Motor neuron (in vitro differentiated cells): ENCODE measurements at regions of chr6 and their contacts with region 1.

Region 1: GRCh38 chr6:35139908-35140655 is 1.1 kb downstream of the TCP11 start:
- ATAC-seq: peak in 2 of 8 experiments; percentile 16 to 50
- H3K4me3 ChIP-seq: no peak overlapping the region
- H3K27ac ChIP-seq: no peak overlapping the region
- H3K4me1 ChIP-seq: peaks cover 2 to 3% of the 10 kb centered on the region in 2 donors

Region 2: GRCh38 chr6:34887753-34888513 is 252.1 kb before region 1 on chr6 and contains the start of gene TAF11:
- in situ Hi-C with region 1: loop called in 1 of 9 experiments (anchors 25 kb)
- ATAC-seq: peak; percentile 85 to 90 (median 87)
- H3K4me3 ChIP-seq: peak within 1 kb of the TSS; percentile 92 to 99 (median 97)
- H3K27ac ChIP-seq: peak within 1 kb of the TSS; percentile 87 to 89
- H3K4me1 ChIP-seq: peaks cover 6 to 15% of the 10 kb centered on the region in 2 donors
- total RNA-seq, gene TAF11: 29.7 to 59.5 (median 39.1) TPM

Region 3: GRCh38 chr6:35202066-35202546 is 62.0 kb after region 1 on chr6:
- in situ Hi-C with region 1: loop called in 1 of 9 experiments (anchors 10 kb)
- ATAC-seq: no peak
- H3K4me3 ChIP-seq: no peak overlapping the region
- H3K27ac ChIP-seq: no peak overlapping the region
- H3K4me1 ChIP-seq: no peaks in the 10 kb centered on the region

Region 4: DNA sequence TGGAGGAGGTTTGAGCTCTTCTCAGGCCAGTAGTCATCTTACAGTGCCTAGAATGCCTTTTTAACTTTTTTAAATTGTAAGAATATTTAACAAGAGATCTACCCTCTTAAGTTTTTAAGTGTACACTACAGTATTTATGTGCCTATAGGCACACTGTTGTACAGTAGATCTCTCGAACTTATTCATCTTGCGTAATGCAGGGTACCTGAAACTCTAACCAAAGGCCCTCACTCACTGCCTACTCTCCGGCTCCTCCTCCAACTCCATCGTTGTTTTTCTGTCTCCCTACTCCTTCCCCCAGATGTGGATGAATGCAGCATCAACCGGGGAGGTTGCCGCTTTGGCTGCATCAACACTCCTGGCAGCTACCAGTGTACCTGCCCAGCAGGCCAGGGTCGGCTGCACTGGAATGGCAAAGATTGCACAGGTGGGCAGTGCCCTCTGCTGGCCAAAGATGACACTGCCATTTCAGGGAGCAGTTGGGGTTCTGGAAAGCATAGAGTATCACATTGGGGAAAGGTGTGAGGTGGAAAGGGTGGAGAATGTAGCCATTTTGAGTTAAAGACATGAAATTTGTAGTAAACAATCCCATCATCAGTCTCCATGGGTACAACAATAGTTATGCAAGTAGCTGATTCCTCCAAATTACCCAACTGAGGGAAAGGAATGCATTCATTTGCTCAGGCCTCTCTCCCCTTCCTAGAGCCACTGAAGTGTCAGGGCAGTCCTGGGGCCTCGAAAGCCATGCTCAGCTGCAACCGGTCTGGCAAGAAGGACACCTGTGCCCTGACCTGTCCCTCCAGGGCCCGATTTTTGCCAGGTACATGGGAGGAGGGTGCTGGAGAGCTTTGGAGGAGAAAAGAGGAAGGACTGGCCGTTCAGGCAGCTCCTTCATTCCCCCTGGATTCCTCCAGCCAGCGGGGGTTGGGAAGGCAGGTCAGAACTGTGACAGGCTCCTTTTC is 101.0 kb after region 1 on chr6:
- in situ Hi-C with region 1: loop called in 1 of 9 experiments (anchors 25 kb)
- ATAC-seq: peak; percentile 81 to 98 (median 90)
- H3K4me3 ChIP-seq: no peak overlapping the region
- H3K27ac ChIP-seq: no peak overlapping the region
- H3K4me1 ChIP-seq: peaks cover 0 to 6% of the 10 kb centered on the region in 2 donors